Common myeloid progenitor, CD34-positive (primary cell): ENCODE measurements at regions of chr5 and their contacts with region 1.

Region 1: DNA sequence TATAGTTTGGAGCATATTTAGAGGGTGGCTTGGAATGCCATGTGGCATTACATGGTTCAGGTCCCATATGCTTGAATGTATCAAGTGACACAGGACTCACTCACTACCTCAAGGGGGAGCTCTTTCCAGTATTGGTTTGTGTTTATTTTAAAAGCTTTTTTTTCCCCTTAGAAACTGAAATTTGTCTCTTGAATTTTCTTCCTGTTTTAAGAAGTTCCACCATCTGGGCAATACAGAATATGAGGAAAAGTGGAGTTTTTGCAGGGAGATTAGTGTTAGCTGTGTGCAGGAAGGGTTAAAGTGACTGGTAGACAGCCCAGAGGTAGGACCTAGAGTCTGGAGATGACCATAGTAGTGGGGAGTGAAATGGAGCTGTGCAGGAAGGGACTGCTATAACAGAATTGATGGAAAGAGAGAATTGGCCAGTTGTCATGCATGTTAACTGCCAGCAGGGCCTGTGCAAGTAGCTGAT is 36.6 kb downstream of the CTNNA1 start:
- DNase-seq: peak; percentile 54 to 78 (median 74)
- H3K4me3 ChIP-seq: no peak overlapping the region
- H3K27ac ChIP-seq: no peak overlapping the region
- H3K4me1 ChIP-seq: peaks cover 0 to 9% (median 2%) of the 10 kb centered on the region in 4 experiments
- H3K27me3 ChIP-seq: no peaks in the 10 kb centered on the region

Region 2: GRCh38 chr5:138803285-138803684 is 13.5 kb after region 1 on chr5:
- CTCF ChIA-PET with region 1: interaction called, 19 read pairs
- POLR2A ChIA-PET with region 1: interaction called, 4 read pairs
- DNase-seq: no peak
- H3K4me3 ChIP-seq: no peak overlapping the region
- H3K27ac ChIP-seq: no peak overlapping the region
- H3K4me1 ChIP-seq: peaks cover 4 to 10% (median 5%) of the 10 kb centered on the region in 4 experiments
- H3K27me3 ChIP-seq: no peaks in the 10 kb centered on the region

Region 3: DNA sequence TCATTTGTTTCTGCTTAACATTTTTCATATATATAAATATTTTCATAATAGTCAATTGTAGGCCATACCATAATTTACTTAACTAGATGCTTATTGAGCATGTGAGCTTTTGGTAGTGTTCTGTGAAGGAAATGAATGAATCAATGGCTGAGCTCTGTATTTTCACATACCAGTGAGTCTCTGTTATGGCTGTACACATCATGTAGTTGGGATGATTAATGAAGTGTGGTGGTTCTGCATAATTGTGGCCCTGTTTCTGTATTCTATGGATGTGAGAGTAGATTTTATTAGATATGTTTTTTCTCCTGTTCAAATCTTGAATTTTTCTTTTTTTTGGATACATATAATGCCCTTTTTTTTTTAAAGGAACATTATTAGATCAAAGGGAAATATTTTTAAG is 19.6 kb after region 1 on chr5:
- CTCF ChIA-PET with region 1: interaction called, 14 read pairs
- POLR2A ChIA-PET with region 1: no interaction called
- DNase-seq: no peak
- H3K4me3 ChIP-seq: no peak overlapping the region
- H3K27ac ChIP-seq: no peak overlapping the region
- H3K4me1 ChIP-seq: peaks cover 4 to 10% (median 5%) of the 10 kb centered on the region in 4 experiments
- H3K27me3 ChIP-seq: no peaks in the 10 kb centered on the region

Region 4: DNA sequence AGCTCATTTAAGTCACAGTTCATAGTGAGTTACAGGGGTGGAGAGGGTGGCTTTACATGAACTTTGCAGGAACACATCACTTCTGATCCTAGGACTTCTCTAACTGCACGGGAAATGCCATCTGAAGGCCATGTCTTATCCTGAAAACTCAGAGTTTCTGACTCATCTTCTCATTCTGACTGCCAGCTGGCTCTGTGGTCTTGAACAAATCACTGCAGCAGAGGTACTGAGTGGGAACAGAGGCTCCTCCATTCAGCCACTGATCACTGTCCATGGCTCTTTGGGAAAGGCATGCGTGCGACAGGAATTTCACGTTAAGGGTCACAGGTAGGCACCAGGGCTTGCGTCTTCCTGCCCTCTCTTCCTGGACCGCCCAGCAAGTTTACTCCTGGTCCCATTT is 199.9 kb after region 1 on chr5:
- CTCF ChIA-PET with region 1: no interaction called
- POLR2A ChIA-PET with region 1: no interaction called
- DNase-seq: no peak
- H3K4me3 ChIP-seq: no peak overlapping the region
- H3K27ac ChIP-seq: no peak overlapping the region
- H3K4me1 ChIP-seq: peaks cover 0 to 16% (median 9%) of the 10 kb centered on the region in 4 experiments
- H3K27me3 ChIP-seq: no peaks in the 10 kb centered on the region